Heart left ventricle (tissue), 16 donors: ENCODE measurements at regions of chr22 and their contacts with region 1.

Region 1: DNA sequence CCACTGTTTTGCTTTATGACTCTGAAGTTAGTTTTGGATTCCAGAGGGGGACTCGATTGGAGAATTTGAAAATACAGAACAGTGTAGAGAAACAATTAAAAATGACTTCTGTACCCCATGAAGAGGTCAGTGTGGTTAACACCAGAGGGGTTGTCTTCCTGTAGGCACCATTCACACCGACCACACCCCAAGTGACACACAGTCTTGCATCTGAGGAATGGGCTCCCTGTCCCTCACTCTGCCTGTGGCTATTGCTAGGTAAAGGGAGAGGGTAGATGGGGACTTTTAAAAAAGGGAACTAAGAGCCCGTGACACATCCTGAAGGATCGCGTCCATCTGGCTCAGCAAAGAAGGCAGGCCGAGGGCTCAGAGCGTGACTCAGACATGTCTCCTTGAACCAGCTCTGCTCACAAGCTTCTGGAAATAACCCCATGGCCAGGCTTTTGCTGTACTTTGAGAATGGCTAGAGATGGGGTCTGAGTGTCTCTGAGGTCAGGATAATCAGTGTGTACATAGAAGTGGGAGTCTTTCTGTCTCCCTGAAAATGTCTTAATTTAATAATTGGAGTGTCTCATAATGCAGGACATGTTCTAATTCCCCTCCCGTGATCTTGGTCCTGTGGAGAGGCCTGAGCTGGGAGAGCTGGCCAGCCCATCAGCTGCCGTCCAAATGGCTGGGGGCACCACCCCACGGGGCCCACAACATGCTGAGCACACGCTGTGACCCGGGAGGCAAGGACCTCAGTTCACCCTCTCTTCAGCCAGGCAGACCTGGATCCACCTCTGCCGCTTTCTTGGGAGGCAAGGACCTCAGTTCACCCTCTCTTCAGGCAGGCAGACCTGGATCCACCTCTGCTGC is 39.3 kb downstream of the SGSM1 start:
- DNase-seq: peak in 1 of 5 donors; percentile 50
- ATAC-seq: peak in 3 of 4 donors; percentile 30 to 74 (median 71)
- H3K4me3 ChIP-seq: no peak overlapping the region
- H3K27ac ChIP-seq: no peak overlapping the region
- H3K4me1 ChIP-seq: peaks cover 0 to 7% (median 0%) of the 10 kb centered on the region in 12 donors
- H3K27me3 ChIP-seq: no peaks in the 10 kb centered on the region
- CTCF ChIP-seq: no peak
- POLR2A ChIP-seq: no peak

Region 2: GRCh38 chr22:24801901-24802465 is 43.3 kb before region 1 on chr22:
- intact Hi-C with region 1: loop called in 1 of 10 experiments (anchors 2 kb)
- DNase-seq: no peak
- ATAC-seq: no peak
- H3K4me3 ChIP-seq: no peak overlapping the region
- H3K27ac ChIP-seq: no peak overlapping the region
- H3K4me1 ChIP-seq: peaks cover 0 to 12% (median 7%) of the 10 kb centered on the region in 12 donors
- H3K27me3 ChIP-seq: no peaks in the 10 kb centered on the region
- CTCF ChIP-seq: no peak
- POLR2A ChIP-seq: no peak

Region 3: GRCh38 chr22:24985826-24986214 is 140.6 kb after region 1 on chr22:
- intact Hi-C with region 1: no loop called
- DNase-seq: peak in 4 of 5 donors; percentile 41 to 74 (median 63)
- ATAC-seq: peak; percentile 59 to 91 (median 82)
- H3K4me3 ChIP-seq: peak overlapping the region in 4 of 12 donors; percentile 5 to 12 (median 11)
- H3K27ac ChIP-seq: peak overlapping the region; percentile 43 to 84 (median 76)
- H3K4me1 ChIP-seq: peaks cover 6 to 89% (median 58%) of the 10 kb centered on the region in 12 donors
- H3K27me3 ChIP-seq: no peaks in the 10 kb centered on the region
- CTCF ChIP-seq: no peak
- POLR2A ChIP-seq: no peak